CD4-positive, alpha-beta memory T cell (primary cell): ENCODE measurements at regions of chr10 and their contacts with region 1.

Region 1: DNA sequence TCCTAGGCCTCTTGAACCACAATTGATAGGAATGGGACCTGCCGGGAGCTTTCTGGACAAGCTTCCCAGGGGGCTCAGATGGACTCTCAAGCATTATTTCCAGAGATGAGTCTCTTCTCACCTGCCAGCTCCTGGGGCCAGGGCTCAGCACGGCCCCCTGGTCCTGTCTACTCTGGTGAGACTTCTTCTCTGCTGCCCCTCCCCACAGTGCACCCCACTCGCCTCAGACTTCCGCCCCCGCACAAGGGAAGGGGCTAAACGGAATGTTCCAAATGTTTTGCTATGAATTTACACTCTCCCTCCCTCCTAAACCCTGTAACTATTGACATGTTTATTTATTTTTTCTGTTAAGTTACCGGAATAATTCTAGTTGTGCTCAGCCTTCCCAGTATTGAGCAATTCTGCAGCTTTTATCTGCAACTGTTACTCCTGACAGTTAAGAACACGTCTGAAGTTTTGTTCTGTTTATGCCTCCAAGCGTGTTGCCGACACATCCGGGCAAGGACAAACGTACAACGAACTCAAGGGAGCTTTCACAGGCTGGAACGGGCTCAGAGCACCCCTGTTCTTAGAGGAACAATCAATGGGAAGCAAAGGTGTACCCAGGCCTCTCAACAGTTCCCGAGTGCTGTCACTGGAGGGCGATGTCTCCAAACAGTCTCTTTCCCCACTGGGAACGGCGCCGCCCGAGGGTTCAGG is 55.2 kb downstream of the FHIP2A start:
- DNase-seq: peak in 1 of 5 donors; percentile 13
- H3K4me3 ChIP-seq: no peak overlapping the region
- H3K4me3 Mint-ChIP-seq: peak overlapping the region in 1 of 8 donors; percentile 36
- H3K27ac ChIP-seq: no peak overlapping the region
- H3K27ac Mint-ChIP-seq: no peak overlapping the region
- H3K4me1 ChIP-seq: no peaks in the 10 kb centered on the region
- H3K4me1 Mint-ChIP-seq: peaks cover 4 to 14% (median 8%) of the 10 kb centered on the region in 4 donors
- H3K27me3 ChIP-seq: no peaks in the 10 kb centered on the region
- H3K27me3 Mint-ChIP-seq: peaks cover 23 to 35% of the 10 kb centered on the region in 2 donors

Region 2: GRCh38 chr10:114486938-114487814 is 389.6 kb before region 1 on chr10:
- CTCF ChIA-PET with region 1: no interaction called
- POLR2A ChIA-PET with region 1: no interaction called
- intact Hi-C with region 1: no loop called
- DNase-seq: no peak
- H3K4me3 ChIP-seq: no peak overlapping the region
- H3K4me3 Mint-ChIP-seq: no peak overlapping the region
- H3K27ac ChIP-seq: no peak overlapping the region
- H3K27ac Mint-ChIP-seq: peak overlapping the region in 4 of 7 donors; percentile 3 to 60 (median 36)
- H3K4me1 ChIP-seq: peaks cover 10% of the 10 kb centered on the region
- H3K4me1 Mint-ChIP-seq: peaks cover 11 to 33% (median 16%) of the 10 kb centered on the region in 4 donors
- H3K27me3 ChIP-seq: no peaks in the 10 kb centered on the region
- H3K27me3 Mint-ChIP-seq: no peaks in the 10 kb centered on the region

Region 3: GRCh38 chr10:114719311-114719710 is 157.4 kb before region 1 on chr10:
- CTCF ChIA-PET with region 1: no interaction called
- POLR2A ChIA-PET with region 1: no interaction called
- intact Hi-C with region 1: no loop called
- DNase-seq: no peak
- H3K4me3 ChIP-seq: no peak overlapping the region
- H3K4me3 Mint-ChIP-seq: no peak overlapping the region
- H3K27ac ChIP-seq: no peak overlapping the region
- H3K27ac Mint-ChIP-seq: no peak overlapping the region
- H3K4me1 ChIP-seq: no peaks in the 10 kb centered on the region
- H3K4me1 Mint-ChIP-seq: no peaks in the 10 kb centered on the region
- H3K27me3 ChIP-seq: no peaks in the 10 kb centered on the region
- H3K27me3 Mint-ChIP-seq: peaks cover 0 to 6% of the 10 kb centered on the region in 2 donors

Region 4: GRCh38 chr10:114821293-114821914 is 55.3 kb before region 1 on chr10 and contains the start of gene FHIP2A:
- CTCF ChIA-PET with region 1: no interaction called
- POLR2A ChIA-PET with region 1: no interaction called
- intact Hi-C with region 1: no loop called
- DNase-seq: peak; percentile 71 to 91 (median 86)
- H3K4me3 ChIP-seq: peak within 1 kb of the TSS; percentile 59 to 66
- H3K4me3 Mint-ChIP-seq: peak within 1 kb of the TSS; percentile 91 to 96 (median 94)
- H3K27ac ChIP-seq: peak within 1 kb of the TSS; percentile 73
- H3K27ac Mint-ChIP-seq: peak within 1 kb of the TSS; percentile 92 to 96 (median 95)
- H3K4me1 ChIP-seq: peaks cover 42% of the 10 kb centered on the region
- H3K4me1 Mint-ChIP-seq: peaks cover 26 to 39% (median 33%) of the 10 kb centered on the region in 4 donors
- H3K27me3 ChIP-seq: no peaks in the 10 kb centered on the region
- H3K27me3 Mint-ChIP-seq: no peaks in the 10 kb centered on the region
- total RNA-seq, gene FHIP2A: 25.1 to 32.1 TPM

Region 5: GRCh38 chr10:114862456-114862855 is 14.3 kb before region 1 on chr10:
- CTCF ChIA-PET with region 1: interaction called, 29 read pairs
- POLR2A ChIA-PET with region 1: no interaction called
- intact Hi-C with region 1: no loop called
- DNase-seq: no peak
- H3K4me3 ChIP-seq: no peak overlapping the region
- H3K4me3 Mint-ChIP-seq: no peak overlapping the region
- H3K27ac ChIP-seq: no peak overlapping the region
- H3K27ac Mint-ChIP-seq: no peak overlapping the region
- H3K4me1 ChIP-seq: peaks cover 4% of the 10 kb centered on the region
- H3K4me1 Mint-ChIP-seq: peaks cover 0 to 7% (median 1%) of the 10 kb centered on the region in 4 donors
- H3K27me3 ChIP-seq: no peaks in the 10 kb centered on the region
- H3K27me3 Mint-ChIP-seq: no peaks in the 10 kb centered on the region

Region 6: DNA sequence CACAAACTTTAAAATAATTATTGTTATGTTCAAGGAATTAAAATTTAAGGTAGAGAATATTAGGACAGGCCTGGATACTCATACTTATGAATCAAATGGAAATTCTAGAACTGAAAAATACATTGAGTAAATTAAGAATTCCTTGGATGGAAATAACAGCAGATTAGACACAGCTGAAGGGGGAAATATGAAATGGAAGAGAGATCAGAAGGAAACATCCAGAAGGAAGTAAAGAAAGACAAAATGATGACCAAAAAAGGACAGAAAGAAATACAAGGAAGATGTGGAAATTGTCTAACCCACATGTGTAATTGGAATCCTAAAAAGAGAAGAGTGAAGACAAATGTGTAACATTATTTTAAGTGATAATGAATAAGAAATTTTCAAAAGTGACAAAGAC is 345.3 kb after region 1 on chr10:
- CTCF ChIA-PET with region 1: no interaction called
- POLR2A ChIA-PET with region 1: no interaction called
- intact Hi-C with region 1: no loop called
- DNase-seq: no peak
- H3K4me3 ChIP-seq: no peak overlapping the region
- H3K4me3 Mint-ChIP-seq: no peak overlapping the region
- H3K27ac ChIP-seq: no peak overlapping the region
- H3K27ac Mint-ChIP-seq: no peak overlapping the region
- H3K4me1 ChIP-seq: no peaks in the 10 kb centered on the region
- H3K4me1 Mint-ChIP-seq: no peaks in the 10 kb centered on the region
- H3K27me3 ChIP-seq: no peaks in the 10 kb centered on the region
- H3K27me3 Mint-ChIP-seq: peaks cover 0 to 3% of the 10 kb centered on the region in 2 donors

Region 7: DNA sequence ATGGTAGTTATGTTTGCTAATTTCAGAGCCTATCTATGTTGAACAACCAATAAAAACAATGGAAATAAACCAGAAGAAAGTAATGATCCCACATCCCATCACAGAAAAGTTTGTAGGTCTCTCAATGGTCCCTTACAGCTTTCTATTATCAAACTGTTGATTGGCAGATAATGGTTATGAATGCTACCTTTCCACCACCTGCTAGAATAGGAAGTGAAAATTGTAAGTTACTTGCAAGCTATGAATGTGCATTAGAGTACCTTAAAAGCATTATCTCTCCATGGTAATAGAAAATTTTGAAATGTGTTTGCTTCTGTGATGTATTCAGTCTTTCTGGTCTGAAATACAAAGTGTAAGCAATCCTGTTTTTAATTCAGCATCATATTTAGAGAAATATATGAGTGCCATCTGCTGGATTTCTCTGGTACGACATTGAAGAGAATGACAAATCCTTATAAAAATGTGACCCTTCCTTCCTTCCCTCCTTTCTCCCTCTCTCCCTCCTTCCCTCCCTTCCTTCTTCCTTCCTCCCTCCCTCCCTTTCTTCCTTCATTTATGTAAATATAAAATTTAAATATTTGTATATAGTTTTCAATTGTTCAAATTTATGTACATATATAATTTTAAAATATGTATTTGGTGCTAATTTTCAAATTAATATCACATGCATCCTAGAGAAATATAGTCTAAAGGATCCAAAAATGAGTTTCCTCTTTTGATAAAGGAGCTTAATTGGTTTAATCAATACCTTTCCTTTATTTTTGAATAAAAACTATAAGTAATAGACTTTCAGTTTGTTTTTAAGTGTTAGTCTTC is 1509.5 kb after region 1 on chr10:
- CTCF ChIA-PET with region 1: no interaction called
- POLR2A ChIA-PET with region 1: no interaction called
- intact Hi-C with region 1: loop called (anchors 10 kb)
- DNase-seq: no peak
- H3K4me3 ChIP-seq: no peak overlapping the region
- H3K4me3 Mint-ChIP-seq: no peak overlapping the region
- H3K27ac ChIP-seq: no peak overlapping the region
- H3K27ac Mint-ChIP-seq: no peak overlapping the region
- H3K4me1 ChIP-seq: no peaks in the 10 kb centered on the region
- H3K4me1 Mint-ChIP-seq: peaks cover 0 to 1% (median 0%) of the 10 kb centered on the region in 4 donors
- H3K27me3 ChIP-seq: no peaks in the 10 kb centered on the region
- H3K27me3 Mint-ChIP-seq: no peaks in the 10 kb centered on the region